ENCODE measurements at regions of chr3 and their contacts with region 1.

Region 1: DNA sequence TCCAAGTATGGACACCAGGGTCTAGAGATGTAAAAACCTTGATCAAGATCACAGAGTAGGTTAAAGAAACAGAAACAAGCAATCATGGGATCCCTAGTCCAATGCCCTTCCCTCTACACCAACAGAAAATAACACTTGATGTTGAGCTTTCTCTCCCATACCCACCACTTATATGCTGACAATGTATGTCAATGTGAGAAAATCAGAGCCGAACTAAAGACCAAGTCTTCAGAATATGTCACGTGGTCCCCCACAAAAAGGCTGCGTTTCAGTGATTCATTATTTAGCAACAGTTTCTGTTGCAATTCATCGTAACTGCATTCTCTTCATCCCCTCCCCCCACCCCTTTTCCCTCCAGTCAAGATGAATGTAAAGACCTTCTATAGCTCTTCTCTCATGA is 278.9 kb upstream of the STT3B start:
- DNase-seq: peak; percentile 65
- ATAC-seq: peak; percentile 45
- H3K4me3 Mint-ChIP-seq: peak overlapping the region; percentile 24
- H3K27ac Mint-ChIP-seq: peak overlapping the region; percentile 99
- H3K4me1 Mint-ChIP-seq: peaks cover 57% of the 10 kb centered on the region
- H3K27me3 Mint-ChIP-seq: peaks cover 4% of the 10 kb centered on the region

Region 2: DNA sequence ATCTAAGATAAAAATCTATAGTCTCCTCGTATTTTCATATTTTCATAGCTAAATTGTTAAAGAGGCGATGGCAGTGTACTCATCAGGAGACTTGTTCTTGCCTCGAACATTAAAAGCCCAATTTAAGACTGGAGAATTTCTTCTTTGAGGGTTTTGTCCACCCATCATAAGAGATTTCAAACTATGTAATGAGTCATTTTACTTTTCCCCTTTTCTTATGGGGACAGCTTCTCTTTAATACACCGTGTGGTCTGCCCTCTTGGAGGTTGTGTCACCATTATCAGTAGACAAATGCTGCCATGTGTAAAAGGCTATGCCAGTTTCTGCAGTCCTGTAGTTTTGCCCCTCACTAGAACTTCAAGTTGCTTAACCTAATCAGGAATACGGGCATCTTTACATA is 630.4 kb before region 1 on chr3:
- CTCF ChIA-PET with region 1: no interaction called
- POLR2A ChIA-PET with region 1: no interaction called
- intact Hi-C with region 1: loop called in 1 of 2 experiments (anchors 2 kb)
- DNase-seq: no peak
- ATAC-seq: peak; percentile 20
- H3K4me3 Mint-ChIP-seq: peak overlapping the region; percentile 17
- H3K27ac Mint-ChIP-seq: peak overlapping the region; percentile 83
- H3K4me1 Mint-ChIP-seq: peaks cover 96% of the 10 kb centered on the region
- H3K27me3 Mint-ChIP-seq: no peaks in the 10 kb centered on the region

Region 3: GRCh38 chr3:31105438-31106077 is 148.2 kb before region 1 on chr3:
- CTCF ChIA-PET with region 1: no interaction called
- POLR2A ChIA-PET with region 1: no interaction called
- intact Hi-C with region 1: loop called in 1 of 2 experiments (anchors 2 kb)
- DNase-seq: peak; percentile 38
- ATAC-seq: peak; percentile 47
- H3K4me3 Mint-ChIP-seq: no peak overlapping the region
- H3K27ac Mint-ChIP-seq: no peak overlapping the region
- H3K4me1 Mint-ChIP-seq: peaks cover 40% of the 10 kb centered on the region
- H3K27me3 Mint-ChIP-seq: no peaks in the 10 kb centered on the region

Region 4: DNA sequence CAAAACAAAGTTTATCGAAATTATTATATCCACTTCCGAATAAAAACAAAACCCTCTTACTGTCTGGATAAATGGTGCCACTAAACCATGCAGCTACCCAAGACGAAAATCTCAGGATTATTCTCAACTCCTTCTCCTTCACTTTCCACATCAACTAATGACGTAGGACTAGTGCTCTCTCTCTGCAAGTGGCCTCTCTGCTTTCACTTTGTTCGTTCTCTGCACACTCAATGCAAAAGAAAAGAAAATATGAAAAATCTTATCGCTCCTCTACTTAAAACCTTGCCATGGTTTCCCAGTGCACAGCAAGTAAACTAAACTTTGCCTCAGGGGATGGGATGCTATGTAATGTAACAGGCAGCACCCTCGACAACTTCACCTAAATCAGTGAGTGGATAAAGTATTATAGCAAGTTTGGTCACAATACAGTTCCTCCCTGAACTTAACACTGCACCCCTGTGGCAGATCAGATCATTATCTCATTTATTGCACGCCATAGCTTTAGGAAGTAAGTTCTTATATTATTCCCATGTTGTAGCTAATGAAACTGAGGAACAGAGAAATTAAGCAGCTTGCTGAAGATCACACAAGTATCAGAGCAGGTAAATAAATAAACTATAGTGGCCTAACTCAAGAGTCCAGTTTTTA is 96.6 kb before region 1 on chr3:
- CTCF ChIA-PET with region 1: no interaction called
- POLR2A ChIA-PET with region 1: no interaction called
- intact Hi-C with region 1: no loop called
- DNase-seq: no peak
- ATAC-seq: peak; percentile 19
- H3K4me3 Mint-ChIP-seq: no peak overlapping the region
- H3K27ac Mint-ChIP-seq: no peak overlapping the region
- H3K4me1 Mint-ChIP-seq: peaks cover 9% of the 10 kb centered on the region
- H3K27me3 Mint-ChIP-seq: no peaks in the 10 kb centered on the region

Region 5: DNA sequence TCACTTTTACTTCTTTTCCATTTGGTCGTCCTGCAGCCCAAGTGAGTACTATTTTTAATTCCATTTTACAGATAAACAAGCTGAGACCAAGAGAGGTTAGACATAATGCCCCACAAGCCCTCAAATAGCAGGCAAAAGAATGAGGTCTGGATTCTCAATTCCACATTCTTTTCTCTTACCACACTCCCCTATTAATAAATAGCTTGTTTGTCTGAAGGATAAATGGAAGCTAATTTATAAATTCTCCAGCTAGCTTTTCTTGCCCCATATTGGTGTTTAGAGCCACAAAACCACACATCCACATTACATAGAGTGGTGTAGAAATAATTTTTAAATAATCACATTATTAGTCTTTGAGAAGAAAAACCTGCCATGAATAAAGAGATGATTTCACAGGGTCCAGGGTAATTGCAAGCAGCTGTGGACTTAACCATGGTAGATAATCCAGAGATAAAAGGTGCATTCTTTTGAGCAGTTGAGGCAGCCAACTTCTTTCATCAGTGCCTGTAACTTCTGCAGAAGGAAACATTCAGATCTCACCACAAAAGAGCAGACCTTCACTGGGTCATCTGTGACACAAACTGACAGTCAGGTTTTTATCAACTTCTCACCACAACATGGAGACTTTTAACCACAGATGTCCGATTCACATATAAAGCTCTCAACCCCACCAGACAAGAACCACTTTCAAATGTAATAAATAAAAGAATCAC is 34.5 kb before region 1 on chr3:
- CTCF ChIA-PET with region 1: interaction called, 3 read pairs
- POLR2A ChIA-PET with region 1: no interaction called
- intact Hi-C with region 1: loop called in 1 of 2 experiments (anchors 1 kb)
- DNase-seq: no peak
- ATAC-seq: no peak
- H3K4me3 Mint-ChIP-seq: no peak overlapping the region
- H3K27ac Mint-ChIP-seq: no peak overlapping the region
- H3K4me1 Mint-ChIP-seq: peaks cover 86% of the 10 kb centered on the region
- H3K27me3 Mint-ChIP-seq: no peaks in the 10 kb centered on the region

Region 6: GRCh38 chr3:31356941-31357340 is 103.2 kb after region 1 on chr3:
- CTCF ChIA-PET with region 1: no interaction called
- POLR2A ChIA-PET with region 1: no interaction called
- intact Hi-C with region 1: loop called in 1 of 2 experiments (anchors 1 kb)
- DNase-seq: peak; percentile 23
- ATAC-seq: peak; percentile 17
- H3K4me3 Mint-ChIP-seq: no peak overlapping the region
- H3K27ac Mint-ChIP-seq: no peak overlapping the region
- H3K4me1 Mint-ChIP-seq: peaks cover 17% of the 10 kb centered on the region
- H3K27me3 Mint-ChIP-seq: no peaks in the 10 kb centered on the region

Region 7: DNA sequence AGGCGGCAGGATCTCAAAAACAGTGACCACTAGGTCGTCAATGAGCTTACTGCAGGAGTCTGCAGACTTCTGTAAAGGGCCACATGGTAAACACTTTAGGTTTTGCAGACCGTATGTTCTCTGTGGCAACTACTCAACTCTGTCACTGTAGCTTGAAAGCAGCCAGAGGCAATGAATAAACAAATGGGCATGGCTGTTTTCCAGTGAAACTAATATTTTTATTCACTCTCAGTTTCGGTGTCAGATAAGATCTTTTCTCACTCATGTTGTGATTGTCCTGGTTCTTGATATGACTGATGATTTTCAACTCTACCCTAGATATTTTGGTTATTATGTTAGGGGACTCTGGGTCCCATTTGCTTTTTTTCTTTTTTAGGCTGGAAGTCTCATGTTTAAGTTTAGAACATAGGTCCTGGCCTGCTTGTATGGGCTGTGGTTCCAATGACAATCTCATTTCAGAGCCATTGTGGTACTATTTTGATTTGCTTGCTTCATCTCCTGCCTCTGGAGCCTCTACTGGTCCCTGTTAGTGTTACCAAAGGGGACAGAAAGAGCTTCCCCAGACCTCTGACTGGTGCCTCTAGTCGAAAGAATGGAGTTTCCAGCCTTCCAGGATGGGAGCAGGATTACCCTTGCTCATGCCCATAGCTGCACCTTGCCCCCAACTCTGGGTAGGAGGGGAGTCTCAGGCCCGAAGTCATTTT is 500.9 kb after region 1 on chr3:
- CTCF ChIA-PET with region 1: no interaction called
- POLR2A ChIA-PET with region 1: no interaction called
- intact Hi-C with region 1: loop called (anchors 2 to 5 kb)
- DNase-seq: no peak
- ATAC-seq: peak; percentile 57
- H3K4me3 Mint-ChIP-seq: no peak overlapping the region
- H3K27ac Mint-ChIP-seq: peak overlapping the region; percentile 95
- H3K4me1 Mint-ChIP-seq: peaks cover 48% of the 10 kb centered on the region
- H3K27me3 Mint-ChIP-seq: peaks cover 2% of the 10 kb centered on the region

Measured in activated CD4-positive, alpha-beta T cell treated with anti-CD3 and anti-CD28 coated beads for 36 hours (primary cell).